Ascending aorta (tissue), 2 donors: ENCODE measurements at regions of chr3 and their contacts with region 1.

Region 1: DNA sequence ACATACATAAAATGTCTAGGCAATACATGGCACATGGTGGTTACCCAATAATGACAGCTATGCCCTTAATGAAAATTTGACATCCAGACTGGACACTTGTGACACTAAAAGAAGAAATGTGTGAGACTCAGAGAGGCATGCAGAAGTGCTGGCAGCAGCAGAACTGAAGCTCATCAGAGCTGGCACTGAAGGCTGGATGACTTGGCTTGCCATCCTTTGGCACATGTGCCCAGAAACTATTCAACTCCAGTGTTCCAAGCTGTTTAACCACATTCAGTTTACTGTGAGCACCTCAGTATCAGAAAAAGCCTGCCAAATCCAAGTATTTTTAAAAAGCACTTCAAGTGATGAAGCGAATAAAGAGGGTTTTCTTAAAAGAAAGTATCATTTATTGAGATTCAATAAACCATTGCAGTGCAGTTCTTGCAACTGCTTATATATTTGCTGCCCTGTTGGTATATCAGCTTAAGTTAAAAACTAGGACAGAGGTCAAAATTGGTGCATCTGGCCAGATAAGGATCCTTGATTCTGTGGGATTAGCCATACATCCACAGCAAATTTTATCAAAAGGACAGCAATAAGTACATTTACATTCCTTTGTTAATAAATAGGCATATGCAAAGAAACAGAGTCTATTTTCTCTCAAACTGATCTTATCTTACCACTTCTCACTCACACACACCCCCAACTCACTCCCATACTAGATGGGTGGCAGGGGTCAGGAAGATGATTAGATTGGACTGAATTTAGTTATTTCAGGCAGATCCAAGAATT is 15.8 kb downstream of the IGSF11 start:
- DNase-seq: no peak
- H3K4me3 ChIP-seq: no peak overlapping the region
- H3K27ac ChIP-seq: no peak overlapping the region
- H3K4me1 ChIP-seq: no peaks in the 10 kb centered on the region
- H3K27me3 ChIP-seq: no peaks in the 10 kb centered on the region
- CTCF ChIP-seq: no peak

Region 2: DNA sequence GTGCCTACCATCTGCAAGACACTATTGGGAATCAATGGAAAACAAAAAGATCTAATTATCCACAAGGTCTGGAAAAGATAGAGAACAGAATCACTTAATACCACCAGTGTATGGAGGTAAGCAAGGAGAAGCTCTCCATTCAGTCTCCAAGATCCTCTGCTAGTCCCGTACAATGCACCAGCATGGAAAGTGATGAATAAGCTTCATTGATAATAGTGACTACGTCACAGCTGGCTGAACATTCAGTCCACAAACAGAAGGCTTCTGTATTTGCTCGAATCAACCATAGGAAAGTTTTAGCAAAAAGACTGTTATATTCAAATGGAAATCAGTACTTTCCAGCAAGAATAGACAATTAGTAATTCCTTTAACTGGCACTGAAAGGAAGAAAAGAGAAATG is 27.1 kb before region 1 on chr3:
- intact Hi-C with region 1: no loop called
- DNase-seq: no peak
- H3K4me3 ChIP-seq: no peak overlapping the region
- H3K27ac ChIP-seq: no peak overlapping the region
- H3K4me1 ChIP-seq: no peaks in the 10 kb centered on the region
- H3K27me3 ChIP-seq: no peaks in the 10 kb centered on the region
- CTCF ChIP-seq: no peak

Region 3: GRCh38 chr3:119034256-119035013 is 15.6 kb after region 1 on chr3 and contains the start of gene IGSF11:
- intact Hi-C with region 1: loop called (anchors 1 kb)
- DNase-seq: no peak
- H3K4me3 ChIP-seq: peak within 1 kb of the TSS; percentile 56 to 72
- H3K27ac ChIP-seq: no peak within 1 kb of the TSS
- H3K4me1 ChIP-seq: no peaks in the 10 kb centered on the region
- H3K27me3 ChIP-seq: no peaks in the 10 kb centered on the region
- CTCF ChIP-seq: peak in 2 of 3 experiments; percentile 34 to 38
- total RNA-seq, gene IGSF11: not detected